ENCODE measurements at regions of chr5 and their contacts with region 1.

Region 1: DNA sequence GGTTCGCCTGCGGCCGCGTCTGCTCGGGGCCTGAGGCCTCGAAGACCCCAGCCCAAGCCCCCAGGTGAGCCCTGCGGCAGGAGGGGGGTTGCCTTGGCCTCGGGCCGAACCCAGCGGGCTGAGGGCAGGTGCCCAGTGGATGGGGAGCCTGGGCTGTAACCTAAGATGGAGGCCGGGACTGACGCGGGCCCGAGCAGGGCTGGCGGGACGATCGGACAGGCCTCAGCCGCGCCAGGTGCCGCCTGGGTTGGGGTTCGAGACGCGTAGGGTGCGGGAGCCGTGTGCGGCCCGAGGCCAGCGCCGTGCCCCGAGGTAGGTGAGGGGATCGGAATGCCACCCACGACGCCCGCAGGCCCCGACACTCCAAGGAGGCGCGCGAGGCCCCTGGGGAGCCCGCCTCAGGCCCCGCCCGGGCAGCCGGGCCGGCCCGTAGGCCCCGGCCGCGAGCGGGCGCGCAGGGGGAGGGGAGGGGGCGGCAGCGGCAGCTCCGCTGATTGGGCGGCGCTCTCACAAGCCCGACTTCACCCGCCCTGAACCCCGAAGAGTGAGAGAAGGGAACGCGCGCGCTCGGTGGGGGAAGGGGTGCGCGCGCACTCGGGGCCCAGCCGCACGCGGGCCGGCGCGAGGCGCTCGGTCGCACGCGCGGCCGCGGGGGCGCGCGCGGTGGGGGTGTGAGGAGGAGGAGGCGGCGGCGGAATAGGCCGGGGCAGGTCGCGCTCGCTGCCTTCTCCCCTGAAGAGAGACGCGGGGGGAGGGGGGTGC is at the start of gene NSD1:
- DNase-seq: peak; percentile 92
- ATAC-seq: peak; percentile 74
- H3K4me3 Mint-ChIP-seq: peak within 1 kb of the TSS; percentile 85
- H3K27ac Mint-ChIP-seq: peak within 1 kb of the TSS; percentile 87
- H3K4me1 Mint-ChIP-seq: peaks cover 52% of the 10 kb centered on the region
- H3K27me3 Mint-ChIP-seq: no peaks in the 10 kb centered on the region
- CTCF ChIP-seq: no peak
- total RNA-seq, gene NSD1: 103 and 108 TPM in 2 replicates

Region 2: GRCh38 chr5:177176175-177176711 is 43.0 kb after region 1 on chr5:
- CTCF ChIA-PET with region 1: no interaction called
- POLR2A ChIA-PET with region 1: no interaction called
- intact Hi-C with region 1: loop called (anchors 5 kb)
- DNase-seq: no peak
- ATAC-seq: no peak
- H3K4me3 Mint-ChIP-seq: peak overlapping the region; percentile 15
- H3K27ac Mint-ChIP-seq: peak overlapping the region; percentile 12
- H3K4me1 Mint-ChIP-seq: peaks cover 55% of the 10 kb centered on the region
- H3K27me3 Mint-ChIP-seq: no peaks in the 10 kb centered on the region
- CTCF ChIP-seq: no peak

Region 3: GRCh38 chr5:178677429-178677828 is 1544.2 kb after region 1 on chr5:
- CTCF ChIA-PET with region 1: no interaction called
- POLR2A ChIA-PET with region 1: no interaction called
- intact Hi-C with region 1: no loop called
- DNase-seq: no peak
- ATAC-seq: no peak
- H3K4me3 Mint-ChIP-seq: no peak overlapping the region
- H3K27ac Mint-ChIP-seq: no peak overlapping the region
- H3K4me1 Mint-ChIP-seq: peaks cover 3% of the 10 kb centered on the region
- H3K27me3 Mint-ChIP-seq: peaks cover 2% of the 10 kb centered on the region
- CTCF ChIP-seq: no peak

Measured in activated B cell treated with CpG ODN at 0.5 μM for 24 hours (primary cell).